Activated CD4-positive, alpha-beta T cell treated with anti-CD3 and anti-CD28 coated beads, Interleukin-2, amount 10 ng/mL, durations not matched to agents 7 days and 5 days (primary cell): ENCODE measurements at regions of chr4 and their contacts with region 1.

Region 1: DNA sequence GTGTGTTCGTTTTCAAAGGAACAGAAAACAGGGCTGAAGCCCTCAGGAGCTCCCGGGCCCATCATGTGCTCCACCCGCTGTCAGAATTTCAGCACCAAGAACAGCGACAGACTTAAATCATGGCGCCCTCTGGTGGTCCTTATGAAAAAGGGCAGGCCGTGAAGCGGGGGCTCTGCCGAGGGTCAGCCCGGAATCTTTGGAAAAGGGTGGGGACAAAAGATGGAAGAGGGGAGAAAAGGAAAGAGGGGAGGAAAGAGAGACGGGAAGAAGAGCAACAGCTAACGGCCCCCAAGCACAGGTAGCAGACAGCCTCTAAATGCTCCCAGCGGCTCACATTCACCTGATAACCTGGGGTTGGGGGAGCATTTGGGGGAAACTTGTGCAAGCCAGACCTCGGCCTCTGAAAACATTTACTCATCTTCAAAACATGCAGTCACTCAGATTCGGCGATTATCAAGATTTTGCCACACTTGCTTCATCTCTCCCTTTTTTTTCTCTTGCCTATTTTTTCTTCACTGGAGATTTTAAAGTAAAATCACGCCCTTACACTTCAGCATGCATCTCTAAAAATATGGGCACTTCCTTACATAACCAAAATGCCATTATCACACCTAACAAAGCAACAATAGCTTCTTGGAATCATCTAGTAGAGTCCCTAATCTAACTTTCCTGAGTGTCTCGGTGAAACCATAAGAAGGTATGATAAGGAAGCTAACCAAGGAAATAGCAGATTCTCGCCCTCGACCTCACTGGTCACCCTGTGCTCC is 28.1 kb upstream of the MAN2B2 start:
- DNase-seq: peak; percentile 67
- H3K4me3 Mint-ChIP-seq: no peak overlapping the region
- H3K27ac Mint-ChIP-seq: no peak overlapping the region
- H3K4me1 Mint-ChIP-seq: no peaks in the 10 kb centered on the region
- H3K27me3 Mint-ChIP-seq: peaks cover 7% of the 10 kb centered on the region

Region 2: GRCh38 chr4:6529021-6529420 is 17.8 kb before region 1 on chr4:
- CTCF ChIA-PET with region 1: no interaction called
- POLR2A ChIA-PET with region 1: no interaction called
- DNase-seq: no peak
- H3K4me3 Mint-ChIP-seq: no peak overlapping the region
- H3K27ac Mint-ChIP-seq: no peak overlapping the region
- H3K4me1 Mint-ChIP-seq: no peaks in the 10 kb centered on the region
- H3K27me3 Mint-ChIP-seq: no peaks in the 10 kb centered on the region

Region 3: GRCh38 chr4:6562931-6563901 is 16.4 kb after region 1 on chr4:
- CTCF ChIA-PET with region 1: interaction called, 12 read pairs
- POLR2A ChIA-PET with region 1: no interaction called
- DNase-seq: no peak
- H3K4me3 Mint-ChIP-seq: no peak overlapping the region
- H3K27ac Mint-ChIP-seq: no peak overlapping the region
- H3K4me1 Mint-ChIP-seq: peaks cover 16% of the 10 kb centered on the region
- H3K27me3 Mint-ChIP-seq: peaks cover 62% of the 10 kb centered on the region